ENCODE measurements at regions of chr16 and their contacts with region 1.

Region 1: GRCh38 chr16:75198135-75198600 is 8.8 kb downstream of the CTRB2 start:
- DNase-seq: no peak
- ATAC-seq: 0 out of 2 replicates have a peak, but pooled peaks have one; percentile 21
- H3K4me3 ChIP-seq: peak overlapping the region; percentile 28; the same call in 1 of the 2 replicates
- H3K27ac ChIP-seq: no peak overlapping the region
- H3K4me1 ChIP-seq: no peaks in the 10 kb centered on the region
- H3K27me3 ChIP-seq: no peaks in the 10 kb centered on the region
- CTCF ChIP-seq: no peak

Region 2: GRCh38 chr16:75238132-75238852 is 40.1 kb after region 1 on chr16:
- CTCF ChIA-PET with region 1: interaction called, 17 read pairs
- POLR2A ChIA-PET with region 1: no interaction called
- intact Hi-C with region 1: loop called (anchors 5 kb)
- DNase-seq: no peak
- ATAC-seq: no peak
- H3K4me3 ChIP-seq: no peak overlapping the region
- H3K27ac ChIP-seq: no peak overlapping the region
- H3K4me1 ChIP-seq: peaks cover 9% of the 10 kb centered on the region; the same call in 1 of the 2 replicates
- H3K27me3 ChIP-seq: no peaks in the 10 kb centered on the region
- CTCF ChIP-seq: no peak

Region 3: GRCh38 chr16:75385507-75386152 is 187.5 kb after region 1 on chr16:
- CTCF ChIA-PET with region 1: interaction called, 7 read pairs
- POLR2A ChIA-PET with region 1: no interaction called
- intact Hi-C with region 1: loop called (anchors 1 kb)
- DNase-seq: peak; percentile 73
- ATAC-seq: no peak
- H3K4me3 ChIP-seq: no peak overlapping the region
- H3K27ac ChIP-seq: no peak overlapping the region
- H3K4me1 ChIP-seq: no peaks in the 10 kb centered on the region; the same call in 1 of the 2 replicates
- H3K27me3 ChIP-seq: no peaks in the 10 kb centered on the region
- CTCF ChIP-seq: peak; percentile 71

Region 4: GRCh38 chr16:75402821-75403475 is 204.8 kb after region 1 on chr16:
- CTCF ChIA-PET with region 1: interaction called, 13 read pairs
- POLR2A ChIA-PET with region 1: interaction called, 4 read pairs
- intact Hi-C with region 1: loop called (anchors 1 kb)
- DNase-seq: peak; percentile 39
- ATAC-seq: peak; percentile 29; the same call in 1 of the 2 replicates
- H3K4me3 ChIP-seq: no peak overlapping the region
- H3K27ac ChIP-seq: peak overlapping the region; percentile 52; the same call in 1 of the 2 replicates
- H3K4me1 ChIP-seq: peaks cover 11% of the 10 kb centered on the region; the same call in 1 of the 2 replicates
- H3K27me3 ChIP-seq: no peaks in the 10 kb centered on the region
- CTCF ChIP-seq: peak; percentile 63; the same call in 1 of the 2 replicates

Region 5: GRCh38 chr16:75464130-75464918 is 266.2 kb after region 1 on chr16 and contains the start of gene TMEM170A:
- CTCF ChIA-PET with region 1: interaction called, 6 read pairs
- POLR2A ChIA-PET with region 1: no interaction called
- intact Hi-C with region 1: loop called (anchors 1 kb)
- DNase-seq: peak; percentile 96
- ATAC-seq: peak; percentile 92
- H3K4me3 ChIP-seq: peak within 1 kb of the TSS; percentile 89
- H3K27ac ChIP-seq: peak within 1 kb of the TSS; percentile 64
- H3K4me1 ChIP-seq: peaks cover 17% of the 10 kb centered on the region; the same call in 1 of the 2 replicates
- H3K27me3 ChIP-seq: no peaks in the 10 kb centered on the region
- CTCF ChIP-seq: peak; percentile 98
- total RNA-seq, gene TMEM170A: 10.1 and 18.6 TPM in 2 replicates

Region 6: DNA sequence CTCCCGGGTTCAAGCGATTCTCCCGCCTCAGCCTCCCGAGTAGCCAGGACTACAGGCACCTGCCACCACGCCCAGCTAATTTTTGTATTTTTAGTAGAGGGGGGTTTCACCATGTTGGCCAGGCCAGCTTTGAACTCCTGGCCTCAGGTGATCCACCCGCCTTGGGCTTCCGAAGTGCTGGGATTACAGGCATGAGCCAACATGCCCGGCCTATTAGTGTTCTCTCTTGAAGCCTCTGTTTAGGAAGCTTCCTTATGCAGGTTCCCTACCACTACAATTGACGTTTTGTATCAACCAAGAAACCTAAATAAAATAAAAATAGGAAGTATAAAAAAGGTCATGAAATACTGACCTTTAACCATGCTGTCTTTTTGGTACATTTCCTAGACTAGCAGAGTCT is 321.7 kb after region 1 on chr16:
- CTCF ChIA-PET with region 1: interaction called, 4 read pairs
- POLR2A ChIA-PET with region 1: no interaction called
- intact Hi-C with region 1: loop called (anchors 5 kb)
- DNase-seq: no peak
- ATAC-seq: no peak
- H3K4me3 ChIP-seq: no peak overlapping the region
- H3K27ac ChIP-seq: no peak overlapping the region
- H3K4me1 ChIP-seq: no peaks in the 10 kb centered on the region
- H3K27me3 ChIP-seq: no peaks in the 10 kb centered on the region
- CTCF ChIP-seq: no peak

Measured in PC-3 (cell line).